ENCODE measurements at regions of chr19 and their contacts with region 1.

Region 1: GRCh38 chr19:38402967-38403861 is at the start of gene FAM98C:
- H3K4me3 ChIP-seq: peak within 1 kb of the TSS; percentile 57
- H3K27ac ChIP-seq: peak within 1 kb of the TSS; percentile 91
- H3K4me1 ChIP-seq: peaks cover 10% of the 10 kb centered on the region
- CTCF ChIP-seq: peak; percentile 100

Region 2: DNA sequence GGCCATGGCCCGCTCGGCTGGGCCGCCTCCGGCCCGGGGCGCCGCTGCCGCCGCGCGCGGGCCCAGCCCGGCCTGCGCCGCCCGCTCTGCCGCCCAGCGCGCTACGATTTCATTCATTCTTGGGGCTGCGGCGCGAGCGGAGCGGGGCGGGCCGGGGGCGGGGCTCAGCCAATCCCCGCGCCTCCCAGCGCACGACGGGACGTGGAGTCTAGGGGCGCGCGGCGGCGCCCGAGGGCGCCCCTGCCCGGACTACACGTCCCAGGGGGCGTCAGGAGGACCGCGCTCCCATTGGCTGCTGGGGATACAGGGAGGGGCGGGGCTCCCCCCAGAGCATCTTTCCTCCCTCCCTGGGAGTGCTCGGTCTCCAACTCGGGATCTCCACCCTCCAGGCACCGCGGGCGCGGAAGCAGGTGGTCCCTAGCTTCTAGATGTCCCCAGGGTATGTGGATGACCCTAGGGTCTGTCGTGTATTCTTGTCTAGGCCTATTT is 173.6 kb before region 1 on chr19:
- CTCF ChIA-PET with region 1: interaction called, 15 read pairs
- POLR2A ChIA-PET with region 1: interaction called, 4 read pairs
- H3K4me3 ChIP-seq: peak overlapping the region; percentile 40
- H3K27ac ChIP-seq: no peak overlapping the region
- H3K4me1 ChIP-seq: peaks cover 10% of the 10 kb centered on the region
- CTCF ChIP-seq: peak; percentile 51

Region 3: DNA sequence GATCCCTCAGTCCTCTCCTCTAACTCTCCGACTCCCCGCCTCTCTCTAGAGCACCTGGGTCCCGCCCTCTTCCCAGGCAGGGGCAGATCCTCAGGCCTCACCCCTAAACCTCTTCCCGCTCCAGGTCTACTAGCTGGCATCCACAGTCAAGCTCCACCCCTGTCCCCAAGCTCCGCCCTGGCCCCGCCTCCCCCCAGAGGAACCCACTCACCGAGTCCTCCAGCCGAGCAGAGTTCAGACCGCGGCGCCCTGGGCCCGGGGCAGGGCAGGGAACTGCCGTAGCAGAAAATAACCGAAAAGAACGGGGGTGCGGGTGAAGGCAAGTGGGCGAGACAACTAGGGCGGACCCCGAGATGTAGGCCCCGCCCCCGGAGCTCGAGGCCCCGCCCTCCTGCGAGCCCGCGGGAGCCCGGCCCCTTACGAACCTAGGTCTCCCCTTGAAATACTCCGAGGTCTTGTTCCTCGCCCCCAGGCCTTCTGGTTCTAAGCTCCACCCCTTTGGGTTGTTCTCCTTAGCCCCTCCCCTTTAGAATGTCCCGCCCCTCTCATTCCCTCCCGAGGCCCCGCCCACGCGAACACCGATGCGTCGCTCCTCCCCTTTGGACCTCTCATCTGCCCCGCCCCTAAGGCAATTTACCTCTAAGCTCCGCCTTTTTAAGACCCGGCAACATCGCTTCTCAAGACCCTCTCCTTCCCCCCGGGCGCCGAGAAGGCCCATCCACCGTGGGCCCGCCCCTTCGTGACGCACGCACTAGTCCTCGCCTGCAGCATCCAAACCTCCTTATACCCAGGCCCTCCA is 15.5 kb before region 1 on chr19 and contains the start of gene GGN:
- CTCF ChIA-PET with region 1: interaction called, 76 read pairs
- POLR2A ChIA-PET with region 1: interaction called, 68 read pairs
- H3K4me3 ChIP-seq: peak within 1 kb of the TSS; percentile 56
- H3K27ac ChIP-seq: peak within 1 kb of the TSS; percentile 63
- H3K4me1 ChIP-seq: peaks cover 19% of the 10 kb centered on the region
- CTCF ChIP-seq: no peak

Region 4: GRCh38 chr19:38448225-38448624 is 45.0 kb after region 1 on chr19:
- CTCF ChIA-PET with region 1: no interaction called
- POLR2A ChIA-PET with region 1: no interaction called
- H3K4me3 ChIP-seq: no peak overlapping the region
- H3K27ac ChIP-seq: no peak overlapping the region
- H3K4me1 ChIP-seq: no peaks in the 10 kb centered on the region
- CTCF ChIP-seq: no peak

Region 5: GRCh38 chr19:38478273-38478967 is 75.2 kb after region 1 on chr19:
- CTCF ChIA-PET with region 1: interaction called, 43 read pairs
- POLR2A ChIA-PET with region 1: interaction called, 4 read pairs
- H3K4me3 ChIP-seq: no peak overlapping the region
- H3K27ac ChIP-seq: no peak overlapping the region
- H3K4me1 ChIP-seq: no peaks in the 10 kb centered on the region
- CTCF ChIP-seq: peak; percentile 77

Region 6: GRCh38 chr19:38544034-38544958 is 141.1 kb after region 1 on chr19:
- CTCF ChIA-PET with region 1: interaction called, 18 read pairs
- POLR2A ChIA-PET with region 1: interaction called, 9 read pairs
- H3K4me3 ChIP-seq: peak overlapping the region; percentile 37
- H3K27ac ChIP-seq: peak overlapping the region; percentile 19
- H3K4me1 ChIP-seq: peaks cover 11% of the 10 kb centered on the region
- CTCF ChIP-seq: peak; percentile 90

Region 7: DNA sequence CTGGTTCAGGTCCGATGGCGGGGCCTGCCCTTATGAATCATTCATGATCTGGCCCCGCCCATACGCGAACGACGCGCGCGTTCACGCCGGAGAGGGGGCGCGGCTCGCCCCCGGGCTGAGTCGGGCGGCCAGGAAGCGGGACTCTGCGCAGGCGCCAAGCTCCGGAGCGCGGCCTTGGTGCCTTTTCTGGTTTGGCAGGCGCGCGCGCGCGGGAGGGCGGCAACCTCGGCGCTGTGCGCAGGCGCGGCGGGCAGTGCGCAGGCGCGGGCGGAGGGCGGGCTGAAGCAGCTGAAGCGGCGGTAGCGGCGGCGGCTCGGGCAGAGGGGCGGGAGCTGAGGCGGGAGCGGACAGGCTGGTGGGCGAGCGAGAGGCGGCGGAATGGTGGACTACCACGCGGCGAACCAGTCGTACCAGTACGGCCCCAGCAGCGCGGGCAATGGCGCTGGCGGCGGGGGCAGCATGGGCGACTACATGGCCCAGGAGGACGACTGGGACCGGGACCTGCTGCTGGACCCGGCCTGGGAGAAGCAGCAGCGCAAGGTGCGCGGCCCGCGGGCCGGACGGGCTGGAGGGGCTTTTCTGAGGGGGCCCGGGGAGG is 244.3 kb after region 1 on chr19 and contains the start of gene ACTN4:
- CTCF ChIA-PET with region 1: interaction called, 8 read pairs
- POLR2A ChIA-PET with region 1: interaction called, 11 read pairs
- H3K4me3 ChIP-seq: peak within 1 kb of the TSS; percentile 84
- H3K27ac ChIP-seq: peak within 1 kb of the TSS; percentile 96
- H3K4me1 ChIP-seq: peaks cover 37% of the 10 kb centered on the region
- CTCF ChIP-seq: peak; percentile 52; the same call in 1 of the 2 replicates

Measured in HEK293 (cell line).